ENCODE measurements at regions of chr17 and their contacts with region 1.

Region 1: GRCh38 chr17:65027305-65027704 is 29.2 kb downstream of the GNA13 start:
- DNase-seq: peak; percentile 75
- ATAC-seq: peak; percentile 72
- H3K4me3 Mint-ChIP-seq: peak overlapping the region; percentile 60
- H3K27ac Mint-ChIP-seq: peak overlapping the region; percentile 91
- H3K4me1 Mint-ChIP-seq: peaks cover 81% of the 10 kb centered on the region
- H3K27me3 Mint-ChIP-seq: no peaks in the 10 kb centered on the region

Region 2: DNA sequence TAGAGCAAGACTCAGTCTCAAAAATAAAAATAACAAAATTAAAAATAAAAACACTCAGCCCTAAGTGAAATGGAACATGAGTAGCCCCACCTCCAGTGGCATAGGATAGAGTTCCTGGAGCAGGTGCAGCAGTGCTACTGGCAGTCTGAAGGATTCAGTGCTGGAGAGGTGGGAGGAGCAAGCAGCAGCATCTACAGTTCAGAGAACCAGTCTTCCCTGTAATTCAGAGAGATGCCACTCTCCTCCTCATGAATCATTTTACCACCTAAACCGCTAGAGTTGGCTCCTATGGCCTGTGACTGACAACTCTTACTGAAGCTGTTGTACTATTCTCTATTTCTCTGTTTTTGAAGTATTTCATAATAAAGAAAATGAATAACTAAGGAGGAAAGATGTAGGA is 309.2 kb before region 1 on chr17:
- CTCF ChIA-PET with region 1: no interaction called
- POLR2A ChIA-PET with region 1: no interaction called
- intact Hi-C with region 1: no loop called
- DNase-seq: no peak
- ATAC-seq: peak; percentile 71
- H3K4me3 Mint-ChIP-seq: no peak overlapping the region
- H3K27ac Mint-ChIP-seq: no peak overlapping the region
- H3K4me1 Mint-ChIP-seq: peaks cover 14% of the 10 kb centered on the region
- H3K27me3 Mint-ChIP-seq: no peaks in the 10 kb centered on the region

Region 3: DNA sequence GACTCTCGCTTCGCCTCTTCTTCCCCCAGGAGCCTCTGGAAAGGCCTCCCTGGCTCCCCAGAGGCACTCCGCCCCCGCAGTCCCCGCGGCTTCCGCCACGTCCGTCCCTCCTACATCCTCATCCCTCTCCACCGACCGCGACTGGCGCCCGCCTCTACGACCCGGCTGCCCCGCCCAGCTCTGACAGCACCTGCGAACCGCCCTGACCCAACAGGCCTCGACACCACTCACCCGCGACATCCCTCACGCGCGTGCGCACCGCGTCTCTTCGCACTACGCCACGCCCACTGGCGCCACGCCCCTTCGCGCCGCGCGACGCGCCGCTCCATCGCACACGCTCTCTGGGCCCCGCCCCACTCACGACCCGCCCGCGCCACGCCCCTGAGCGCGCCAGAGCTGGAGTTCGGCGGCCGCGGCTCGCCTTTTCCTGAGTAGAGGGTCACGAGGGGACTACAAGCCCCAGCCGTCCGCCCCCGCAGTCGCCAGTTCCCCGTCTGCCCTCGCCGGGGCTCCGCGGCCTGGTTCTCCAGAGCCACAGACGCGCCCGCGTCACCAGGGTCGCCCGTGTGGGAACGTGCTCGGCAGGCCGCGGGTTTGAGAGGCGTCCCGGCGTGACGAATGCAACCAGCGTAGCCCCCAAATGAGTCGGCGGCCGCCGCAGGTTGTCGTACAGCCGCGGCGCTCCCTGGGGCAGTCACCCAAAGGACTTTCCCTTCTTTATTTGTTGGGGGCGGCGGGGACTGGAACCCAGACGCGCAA is 51.8 kb before region 1 on chr17:
- CTCF ChIA-PET with region 1: interaction called, 3 read pairs
- POLR2A ChIA-PET with region 1: interaction called, 4 read pairs
- intact Hi-C with region 1: loop called (anchors 1 kb)
- DNase-seq: peak; percentile 97
- ATAC-seq: peak; percentile 80
- H3K4me3 Mint-ChIP-seq: peak overlapping the region; percentile 81
- H3K27ac Mint-ChIP-seq: peak overlapping the region; percentile 98
- H3K4me1 Mint-ChIP-seq: peaks cover 59% of the 10 kb centered on the region
- H3K27me3 Mint-ChIP-seq: no peaks in the 10 kb centered on the region

Region 4: GRCh38 chr17:64984851-64985521 is 42.3 kb before region 1 on chr17:
- CTCF ChIA-PET with region 1: interaction called, 3 read pairs
- POLR2A ChIA-PET with region 1: interaction called, 3 read pairs
- intact Hi-C with region 1: loop called (anchors 1 kb)
- DNase-seq: peak; percentile 65
- ATAC-seq: peak; percentile 44
- H3K4me3 Mint-ChIP-seq: peak overlapping the region; percentile 72
- H3K27ac Mint-ChIP-seq: peak overlapping the region; percentile 99
- H3K4me1 Mint-ChIP-seq: peaks cover 49% of the 10 kb centered on the region
- H3K27me3 Mint-ChIP-seq: no peaks in the 10 kb centered on the region

Region 5: DNA sequence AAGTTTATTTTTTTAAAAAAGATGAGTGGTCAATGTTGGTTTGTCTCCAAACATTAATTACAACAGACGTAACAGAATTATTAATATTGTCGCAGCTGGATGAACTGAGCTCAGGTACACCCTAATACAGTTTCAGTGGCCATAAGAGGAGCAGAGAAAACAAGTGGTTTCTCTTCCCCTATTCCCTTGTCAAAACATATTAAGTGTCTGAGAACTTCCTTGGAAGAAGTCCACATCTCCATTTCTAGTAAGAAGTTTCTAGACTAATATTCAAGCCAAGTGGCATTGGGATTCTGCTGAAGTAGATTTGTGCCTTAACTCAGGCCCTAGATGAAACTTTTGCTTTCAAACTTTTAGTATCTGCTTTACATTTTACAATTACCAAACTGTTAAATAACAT is 18.4 kb before region 1 on chr17:
- CTCF ChIA-PET with region 1: interaction called, 15 read pairs
- POLR2A ChIA-PET with region 1: interaction called, 3 read pairs
- intact Hi-C with region 1: no loop called
- DNase-seq: no peak
- ATAC-seq: no peak
- H3K4me3 Mint-ChIP-seq: no peak overlapping the region
- H3K27ac Mint-ChIP-seq: no peak overlapping the region
- H3K4me1 Mint-ChIP-seq: peaks cover 37% of the 10 kb centered on the region
- H3K27me3 Mint-ChIP-seq: no peaks in the 10 kb centered on the region

Region 6: GRCh38 chr17:65039336-65039988 is 12.2 kb after region 1 on chr17:
- CTCF ChIA-PET with region 1: interaction called, 5 read pairs
- POLR2A ChIA-PET with region 1: interaction called, 11 read pairs
- intact Hi-C with region 1: loop called (anchors 1 kb)
- DNase-seq: peak; percentile 65
- ATAC-seq: peak; percentile 90
- H3K4me3 Mint-ChIP-seq: peak overlapping the region; percentile 54
- H3K27ac Mint-ChIP-seq: peak overlapping the region; percentile 99
- H3K4me1 Mint-ChIP-seq: peaks cover 84% of the 10 kb centered on the region
- H3K27me3 Mint-ChIP-seq: no peaks in the 10 kb centered on the region

Region 7: GRCh38 chr17:65181237-65182061 is 154.1 kb after region 1 on chr17:
- CTCF ChIA-PET with region 1: interaction called, 3 read pairs
- POLR2A ChIA-PET with region 1: no interaction called
- intact Hi-C with region 1: loop called in 1 of 2 experiments (anchors 5 kb)
- DNase-seq: peak; percentile 71
- ATAC-seq: peak; percentile 77
- H3K4me3 Mint-ChIP-seq: no peak overlapping the region
- H3K27ac Mint-ChIP-seq: peak overlapping the region; percentile 75
- H3K4me1 Mint-ChIP-seq: peaks cover 54% of the 10 kb centered on the region
- H3K27me3 Mint-ChIP-seq: peaks cover 9% of the 10 kb centered on the region